ENCODE measurements at regions of chr18 and their contacts with region 1.

Region 1: GRCh38 chr18:13375302-13376255 is 157.0 kb downstream of the LDLRAD4 start:
- DNase-seq: peak; percentile 55 to 92 (median 65)
- H3K4me3 ChIP-seq: peak overlapping the region in 1 of 2 donors; percentile 41
- H3K4me3 Mint-ChIP-seq: peak overlapping the region; percentile 75 to 91 (median 80)
- H3K27ac ChIP-seq: peak overlapping the region; percentile 76
- H3K27ac Mint-ChIP-seq: peak overlapping the region; percentile 90 to 100 (median 99)
- H3K4me1 ChIP-seq: peaks cover 86% of the 10 kb centered on the region
- H3K4me1 Mint-ChIP-seq: peaks cover 52 to 84% (median 71%) of the 10 kb centered on the region in 4 donors
- H3K27me3 ChIP-seq: no peaks in the 10 kb centered on the region
- H3K27me3 Mint-ChIP-seq: no peaks in the 10 kb centered on the region

Region 2: GRCh38 chr18:13279181-13280069 is 96.2 kb before region 1 on chr18:
- CTCF ChIA-PET with region 1: interaction called, 4 read pairs
- POLR2A ChIA-PET with region 1: interaction called, 97 read pairs
- intact Hi-C with region 1: loop called (anchors 5 kb)
- DNase-seq: peak in 3 of 5 donors; percentile 37 to 51 (median 41)
- H3K4me3 ChIP-seq: peak overlapping the region; percentile 7 to 46
- H3K4me3 Mint-ChIP-seq: peak overlapping the region; percentile 81 to 93 (median 88)
- H3K27ac ChIP-seq: peak overlapping the region; percentile 53
- H3K27ac Mint-ChIP-seq: peak overlapping the region; percentile 82 to 98 (median 94)
- H3K4me1 ChIP-seq: peaks cover 80% of the 10 kb centered on the region
- H3K4me1 Mint-ChIP-seq: peaks cover 48 to 88% (median 72%) of the 10 kb centered on the region in 4 donors
- H3K27me3 ChIP-seq: no peaks in the 10 kb centered on the region
- H3K27me3 Mint-ChIP-seq: peaks cover 0 to 2% of the 10 kb centered on the region in 2 donors

Region 3: GRCh38 chr18:13318731-13319501 is 56.7 kb before region 1 on chr18:
- CTCF ChIA-PET with region 1: no interaction called
- POLR2A ChIA-PET with region 1: no interaction called
- intact Hi-C with region 1: no loop called
- DNase-seq: no peak
- H3K4me3 ChIP-seq: no peak overlapping the region
- H3K4me3 Mint-ChIP-seq: no peak overlapping the region
- H3K27ac ChIP-seq: no peak overlapping the region
- H3K27ac Mint-ChIP-seq: peak overlapping the region in 3 of 7 donors; percentile 3 to 70 (median 11)
- H3K4me1 ChIP-seq: peaks cover under 1% of the 10 kb centered on the region
- H3K4me1 Mint-ChIP-seq: peaks cover 0 to 10% (median 3%) of the 10 kb centered on the region in 4 donors
- H3K27me3 ChIP-seq: no peaks in the 10 kb centered on the region
- H3K27me3 Mint-ChIP-seq: no peaks in the 10 kb centered on the region

Region 4: DNA sequence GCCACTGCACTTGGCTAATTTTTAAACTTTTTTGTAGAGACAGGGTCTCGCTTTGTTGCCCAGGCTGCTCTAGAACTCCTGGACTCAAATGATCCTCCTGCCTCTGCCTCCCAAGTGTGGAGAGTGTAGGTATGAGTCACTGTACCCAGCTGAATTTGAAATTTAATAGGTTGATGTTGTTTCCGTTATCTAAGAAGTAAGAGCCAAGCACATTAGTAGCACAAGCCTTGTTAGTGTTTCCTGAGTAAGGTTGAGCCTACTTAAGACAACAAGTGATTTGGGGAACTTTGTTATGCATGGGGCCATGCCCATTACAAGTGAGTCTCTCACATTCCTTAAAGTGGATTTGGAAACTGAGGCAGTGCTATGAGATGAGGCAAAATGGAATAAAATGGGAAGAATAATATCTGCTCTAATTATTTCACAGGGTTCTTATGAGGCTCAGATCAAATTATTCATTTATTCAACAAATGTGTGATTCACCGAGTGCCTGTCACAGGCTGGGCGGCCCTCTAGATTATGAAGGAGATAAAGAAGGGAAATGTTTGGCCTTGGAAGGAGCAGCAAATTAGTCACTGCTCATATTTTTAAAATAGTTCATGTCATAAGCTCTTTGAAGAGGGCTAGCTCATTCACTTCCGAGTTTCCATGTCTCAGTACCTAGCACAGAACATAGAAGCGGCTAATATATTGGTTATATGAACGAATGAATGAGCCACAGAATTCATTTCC is 60.2 kb after region 1 on chr18:
- CTCF ChIA-PET with region 1: interaction called, 7 read pairs
- POLR2A ChIA-PET with region 1: interaction called, 21 read pairs
- intact Hi-C with region 1: loop called (anchors 2 kb)
- DNase-seq: peak in 2 of 5 donors; percentile 15 to 53
- H3K4me3 ChIP-seq: no peak overlapping the region
- H3K4me3 Mint-ChIP-seq: peak overlapping the region in 5 of 8 donors; percentile 30 to 89 (median 67)
- H3K27ac ChIP-seq: no peak overlapping the region
- H3K27ac Mint-ChIP-seq: peak overlapping the region; percentile 79 to 97 (median 95)
- H3K4me1 ChIP-seq: peaks cover 50% of the 10 kb centered on the region
- H3K4me1 Mint-ChIP-seq: peaks cover 36 to 58% (median 50%) of the 10 kb centered on the region in 4 donors
- H3K27me3 ChIP-seq: no peaks in the 10 kb centered on the region
- H3K27me3 Mint-ChIP-seq: no peaks in the 10 kb centered on the region

Region 5: DNA sequence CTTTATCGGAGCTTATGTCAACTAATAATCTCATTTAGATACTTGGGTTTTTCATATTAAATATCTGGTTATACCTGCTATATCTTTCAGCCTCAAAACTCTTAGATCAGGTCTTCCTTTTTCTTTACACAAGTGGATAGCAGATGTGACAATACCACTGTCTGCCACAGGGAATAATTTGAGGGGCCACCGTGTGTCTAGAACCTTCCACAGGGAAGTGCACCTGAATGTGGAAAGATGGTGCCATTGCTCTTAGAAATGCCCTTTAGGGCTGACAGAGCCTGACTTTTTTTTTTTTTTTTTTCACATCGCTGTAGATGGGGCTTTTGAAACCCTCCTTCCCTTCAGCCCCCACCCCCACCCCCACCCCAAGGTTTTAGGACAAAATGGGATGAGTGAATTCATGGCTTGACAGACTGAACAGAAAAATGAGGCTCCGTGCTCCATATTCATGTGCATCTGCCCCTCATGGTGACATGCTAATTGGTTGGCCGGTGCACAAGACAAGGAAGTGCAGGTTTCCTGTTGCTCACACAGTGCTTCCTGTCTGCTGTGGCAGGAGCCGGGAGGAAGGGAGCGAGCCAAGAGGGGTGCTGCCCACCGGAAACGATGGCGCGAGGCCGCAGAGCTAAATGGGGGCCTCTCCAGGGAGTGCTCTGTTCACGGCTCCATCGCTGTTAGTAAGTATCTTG is 89.0 kb after region 1 on chr18:
- CTCF ChIA-PET with region 1: interaction called, 4 read pairs
- POLR2A ChIA-PET with region 1: interaction called, 7 read pairs
- intact Hi-C with region 1: loop called (anchors 5 kb)
- DNase-seq: peak; percentile 56 to 83 (median 65)
- H3K4me3 ChIP-seq: peak overlapping the region; percentile 41 to 67
- H3K4me3 Mint-ChIP-seq: peak overlapping the region; percentile 86 to 96 (median 94)
- H3K27ac ChIP-seq: peak overlapping the region; percentile 47
- H3K27ac Mint-ChIP-seq: peak overlapping the region; percentile 88 to 97 (median 93)
- H3K4me1 ChIP-seq: peaks cover 60% of the 10 kb centered on the region
- H3K4me1 Mint-ChIP-seq: peaks cover 52 to 80% (median 63%) of the 10 kb centered on the region in 4 donors
- H3K27me3 ChIP-seq: no peaks in the 10 kb centered on the region
- H3K27me3 Mint-ChIP-seq: no peaks in the 10 kb centered on the region

Region 6: DNA sequence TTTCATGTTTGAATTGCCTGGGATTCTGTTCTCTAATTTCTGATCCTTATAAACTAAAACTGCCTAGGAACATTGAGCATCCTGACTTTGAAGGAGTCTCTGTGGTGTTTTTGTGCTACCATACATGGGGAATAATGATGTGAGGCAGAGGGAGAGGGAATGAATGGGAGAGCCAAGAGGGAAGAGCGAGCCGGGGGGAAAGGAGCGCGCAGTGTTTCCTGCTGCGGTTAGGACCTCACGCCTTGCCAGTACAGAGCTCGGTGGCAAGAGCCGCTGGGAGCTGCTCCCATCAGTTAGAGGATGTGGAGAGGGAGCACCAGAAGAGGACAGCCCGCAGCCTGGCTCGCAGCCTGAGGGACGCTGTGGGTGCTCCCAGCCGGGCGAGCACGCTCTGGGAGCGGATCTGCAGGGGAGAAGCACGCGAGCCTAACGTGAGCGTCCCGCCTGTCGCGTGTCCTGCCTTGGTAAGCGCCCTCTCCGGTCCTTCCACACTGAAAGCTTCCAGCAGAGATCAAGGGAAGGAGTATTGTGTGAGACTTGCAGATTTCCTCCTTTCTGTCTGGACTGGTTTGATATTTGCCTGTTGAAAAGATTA is 236.1 kb after region 1 on chr18:
- CTCF ChIA-PET with region 1: interaction called, 3 read pairs
- POLR2A ChIA-PET with region 1: interaction called, 21 read pairs
- intact Hi-C with region 1: loop called (anchors 5 kb)
- DNase-seq: no peak
- H3K4me3 ChIP-seq: peak overlapping the region; percentile 34 to 51
- H3K4me3 Mint-ChIP-seq: peak overlapping the region; percentile 78 to 96 (median 88)
- H3K27ac ChIP-seq: peak overlapping the region; percentile 11
- H3K27ac Mint-ChIP-seq: peak overlapping the region; percentile 83 to 96 (median 91)
- H3K4me1 ChIP-seq: peaks cover 81% of the 10 kb centered on the region
- H3K4me1 Mint-ChIP-seq: peaks cover 68 to 85% (median 76%) of the 10 kb centered on the region in 4 donors
- H3K27me3 ChIP-seq: no peaks in the 10 kb centered on the region
- H3K27me3 Mint-ChIP-seq: no peaks in the 10 kb centered on the region

Region 7: DNA sequence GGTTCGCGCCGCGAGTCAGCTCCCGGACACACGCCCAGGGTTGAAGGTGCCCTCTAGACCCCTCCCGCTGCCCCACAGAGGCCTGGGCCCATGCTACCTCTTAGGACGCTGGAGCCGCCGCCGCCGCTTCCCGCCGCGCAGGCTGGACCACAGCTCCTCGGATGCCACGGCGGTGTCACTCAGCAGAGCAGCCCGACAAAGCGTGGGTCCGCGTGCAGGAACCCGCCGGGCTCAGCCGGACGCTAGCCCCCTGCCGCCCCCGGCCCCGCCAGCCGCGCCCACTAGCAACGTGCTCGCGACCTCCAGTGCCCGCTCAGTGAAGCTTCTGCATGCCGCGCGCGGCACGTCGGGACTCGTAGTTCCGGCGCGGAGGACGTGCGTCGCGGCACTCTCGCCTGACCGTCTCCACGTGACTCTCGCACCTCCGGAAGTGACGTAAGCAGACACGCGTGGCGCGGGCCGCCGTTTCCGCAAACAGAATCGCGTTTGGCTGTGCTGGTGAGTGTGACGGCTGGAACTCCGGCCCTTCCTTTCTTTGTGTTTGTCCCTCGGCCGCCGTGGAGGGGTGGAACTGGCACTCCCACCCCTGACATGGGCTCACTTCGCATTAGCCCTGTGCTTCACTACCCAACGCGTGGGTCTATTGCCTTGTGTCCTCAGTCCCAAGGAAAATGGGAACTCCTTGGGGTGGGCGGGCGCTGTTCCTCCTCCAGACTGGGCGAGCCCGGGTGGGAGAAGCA is 350.8 kb after region 1 on chr18 and contains the starts of genes FAM210A and RNMT:
- CTCF ChIA-PET with region 1: no interaction called
- POLR2A ChIA-PET with region 1: no interaction called
- intact Hi-C with region 1: loop called (anchors 5 kb)
- DNase-seq: peak; percentile 90 to 95 (median 92)
- H3K4me3 ChIP-seq: peak within 1 kb of the TSS; percentile 76 to 78
- H3K4me3 Mint-ChIP-seq: peak within 1 kb of the TSS; percentile 87 to 97 (median 92)
- H3K27ac ChIP-seq: peak within 1 kb of the TSS; percentile 96
- H3K27ac Mint-ChIP-seq: peak within 1 kb of the TSS; percentile 85 to 98 (median 97)
- H3K4me1 ChIP-seq: peaks cover 49% of the 10 kb centered on the region
- H3K4me1 Mint-ChIP-seq: peaks cover 41 to 67% (median 51%) of the 10 kb centered on the region in 4 donors
- H3K27me3 ChIP-seq: no peaks in the 10 kb centered on the region
- H3K27me3 Mint-ChIP-seq: no peaks in the 10 kb centered on the region
- total RNA-seq, gene FAM210A: 9.4 to 10.2 TPM
- total RNA-seq, gene RNMT: 53.7 to 55.0 TPM